ENCODE measurements at regions of chr5 and their contacts with region 1.

Region 1: DNA sequence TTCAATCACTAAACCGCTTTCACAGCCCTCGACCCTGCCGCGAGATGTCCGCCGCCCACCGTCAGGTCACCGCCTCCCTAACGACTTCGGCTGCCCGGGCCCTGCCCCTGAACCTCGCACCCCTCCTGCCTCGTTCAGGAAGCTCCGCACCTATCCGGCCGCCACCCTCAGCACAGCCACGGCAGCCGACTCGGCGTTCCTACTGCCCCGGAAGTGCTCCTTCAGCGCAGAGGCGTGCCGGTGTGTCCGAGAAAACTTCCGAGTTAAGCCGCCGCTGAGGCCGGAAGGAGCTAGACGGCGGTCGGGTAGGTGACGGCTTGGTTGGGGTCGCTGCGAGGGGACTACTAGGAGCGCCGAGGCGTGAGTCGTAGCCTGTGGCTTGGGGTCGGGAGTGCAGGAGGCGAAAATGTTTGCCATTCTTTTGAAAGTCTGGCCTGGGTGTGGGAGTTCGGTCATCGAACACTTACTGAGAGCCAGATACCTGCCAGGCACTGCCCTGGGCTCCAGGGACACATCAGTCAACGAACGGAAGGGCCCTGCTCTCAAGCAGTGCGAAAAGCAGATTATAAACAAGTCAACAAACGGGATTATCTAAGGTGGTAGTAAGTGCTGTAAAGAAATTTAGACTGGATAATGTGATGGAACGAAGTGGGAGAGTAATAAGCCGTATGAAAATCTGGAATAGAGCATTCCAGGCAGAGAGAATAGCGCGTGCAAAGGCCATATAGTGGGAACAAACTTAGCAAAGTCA is at the starts of genes FAM114A2 and MFAP3:
- DNase-seq: peak; percentile 93
- ATAC-seq: peak; percentile 100
- H3K4me3 Mint-ChIP-seq: peak within 1 kb of the TSS; percentile 87
- H3K27ac Mint-ChIP-seq: peak within 1 kb of the TSS; percentile 97
- H3K4me1 Mint-ChIP-seq: peaks cover 47% of the 10 kb centered on the region
- H3K27me3 Mint-ChIP-seq: no peaks in the 10 kb centered on the region
- total RNA-seq, gene FAM114A2: 17.8 to 23.1 TPM
- total RNA-seq, gene MFAP3: 21.0 to 23.0 TPM

Region 2: DNA sequence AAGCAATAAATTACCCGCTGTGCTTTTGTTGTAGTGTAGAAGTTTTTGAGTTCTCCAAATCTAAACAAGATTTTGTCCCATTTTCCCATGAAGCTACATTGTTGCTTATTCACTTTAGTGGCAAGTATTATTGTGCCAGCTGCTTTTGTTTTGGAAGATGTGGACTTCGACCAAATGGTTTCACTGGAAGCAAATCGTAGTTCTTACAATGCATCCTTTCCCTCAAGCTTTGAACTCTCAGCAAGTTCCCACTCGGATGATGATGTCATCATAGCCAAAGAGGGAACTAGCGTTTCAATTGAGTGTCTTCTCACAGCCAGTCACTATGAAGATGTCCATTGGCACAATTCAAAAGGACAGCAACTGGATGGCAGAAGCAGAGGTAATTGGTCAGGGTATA is 10.8 kb after region 1 on chr5:
- CTCF ChIA-PET with region 1: interaction called, 4 read pairs
- POLR2A ChIA-PET with region 1: interaction called, 13 read pairs
- DNase-seq: no peak
- ATAC-seq: no peak
- H3K4me3 Mint-ChIP-seq: no peak overlapping the region
- H3K27ac Mint-ChIP-seq: no peak overlapping the region
- H3K4me1 Mint-ChIP-seq: peaks cover 21% of the 10 kb centered on the region
- H3K27me3 Mint-ChIP-seq: no peaks in the 10 kb centered on the region

Region 3: DNA sequence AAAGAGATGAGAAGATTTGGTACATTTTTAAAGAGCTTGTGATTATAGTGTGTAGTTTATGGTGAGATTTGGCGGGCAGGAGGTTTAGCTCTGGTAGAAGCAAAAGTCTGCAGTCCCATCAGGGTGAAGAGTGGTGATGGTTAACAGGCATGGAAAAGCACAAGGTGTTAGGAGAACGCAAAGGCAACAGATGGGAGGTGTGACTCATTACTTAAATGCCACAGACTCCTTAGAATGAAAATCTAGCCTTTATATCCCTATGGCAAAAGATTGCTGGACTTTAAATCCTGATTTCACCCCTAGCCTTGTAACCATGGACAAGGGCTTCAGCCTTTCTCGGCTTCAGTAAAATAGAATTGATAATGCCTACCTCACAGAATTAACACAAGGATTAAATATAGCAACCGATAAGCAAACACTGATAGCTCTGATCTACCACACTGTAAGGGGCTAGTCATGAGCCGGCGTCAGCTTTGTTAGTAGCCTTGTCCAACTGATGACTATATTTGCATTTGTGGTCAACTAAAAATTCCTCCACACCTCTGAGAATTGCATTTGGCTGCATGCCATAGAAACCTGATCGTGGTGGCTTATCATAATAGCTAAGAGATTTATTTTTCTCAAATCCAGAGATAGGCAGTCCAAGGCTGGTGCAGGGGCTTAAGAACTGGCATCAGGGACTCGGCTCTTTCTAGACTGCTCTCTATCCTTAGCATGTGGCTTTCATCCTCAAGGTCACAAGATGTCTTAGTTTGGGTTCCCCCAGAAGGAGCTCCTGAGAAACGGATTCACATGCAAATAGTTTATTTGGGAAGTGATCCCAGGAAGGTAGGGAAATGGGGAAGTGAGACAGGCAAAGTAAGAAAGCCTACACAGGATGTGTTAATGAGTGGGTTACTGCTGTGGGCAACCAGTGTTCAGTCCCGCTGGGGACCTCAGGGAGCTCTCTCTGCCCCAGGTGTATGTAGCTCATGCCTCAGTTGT is 19.5 kb after region 1 on chr5:
- CTCF ChIA-PET with region 1: interaction called, 5 read pairs
- POLR2A ChIA-PET with region 1: interaction called, 16 read pairs
- DNase-seq: no peak
- ATAC-seq: peak; percentile 58
- H3K4me3 Mint-ChIP-seq: no peak overlapping the region
- H3K27ac Mint-ChIP-seq: peak overlapping the region; percentile 36
- H3K4me1 Mint-ChIP-seq: peaks cover 21% of the 10 kb centered on the region
- H3K27me3 Mint-ChIP-seq: no peaks in the 10 kb centered on the region

Measured in activated CD8-positive, alpha-beta T cell treated with anti-CD3 and anti-CD28 coated beads, Interleukin-2, amount 10 ng/mL, durations not matched to agents 7 days and 5 days (primary cell).